Naive thymus-derived CD4-positive, alpha-beta T cell (primary cell): ENCODE measurements at regions of chrX and their contacts with region 1.

Region 1: DNA sequence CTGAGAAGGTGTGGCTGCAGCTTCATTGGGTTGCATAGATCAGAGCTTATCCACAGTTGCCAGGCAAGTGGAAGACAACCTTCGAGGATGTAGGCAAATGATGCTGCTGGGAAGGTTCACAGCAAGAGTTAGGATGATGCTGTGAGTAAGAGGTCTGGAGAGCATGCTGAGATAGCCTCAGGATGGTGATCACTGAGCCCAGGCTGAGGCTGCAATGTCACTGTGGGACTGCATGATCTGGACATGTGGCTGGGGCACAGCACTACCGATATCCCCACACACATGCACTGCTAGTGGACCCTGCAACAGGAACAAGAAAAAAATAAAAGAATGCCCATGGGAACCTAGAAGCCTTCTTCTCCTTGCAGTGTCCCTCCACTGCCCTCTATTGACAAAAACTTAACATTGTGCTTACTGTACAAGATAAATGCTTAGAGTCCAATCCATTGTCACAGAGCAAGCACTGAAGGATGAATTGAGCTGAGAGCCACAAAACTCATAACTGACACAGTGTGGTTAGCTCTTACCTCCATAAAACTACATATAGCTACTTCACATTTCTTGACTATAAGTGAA is 105.6 kb downstream of the CNKSR2 start:
- DNase-seq: peak in 7 of 9 donors; percentile 13 to 59 (median 43)
- ATAC-seq: peak; percentile 67
- H3K4me3 ChIP-seq: no peak overlapping the region
- H3K4me3 Mint-ChIP-seq: no peak overlapping the region
- H3K27ac ChIP-seq: no peak overlapping the region
- H3K27ac Mint-ChIP-seq: no peak overlapping the region
- H3K4me1 ChIP-seq: no peaks in the 10 kb centered on the region
- H3K4me1 Mint-ChIP-seq: peaks cover 0 to 22% (median 14%) of the 10 kb centered on the region in 7 donors
- H3K27me3 ChIP-seq: peaks cover 0 to 3% of the 10 kb centered on the region in 2 donors
- H3K27me3 Mint-ChIP-seq: no peaks in the 10 kb centered on the region

Region 2: GRCh38 chrX:20181598-20182329 is 1298.0 kb before region 1 on chrX:
- CTCF ChIA-PET with region 1: no interaction called
- POLR2A ChIA-PET with region 1: no interaction called
- intact Hi-C with region 1: no loop called
- DNase-seq: peak in 2 of 9 donors; percentile 7 to 11
- ATAC-seq: no peak
- H3K4me3 ChIP-seq: no peak overlapping the region
- H3K4me3 Mint-ChIP-seq: peak overlapping the region in 1 of 10 donors; percentile 21
- H3K27ac ChIP-seq: no peak overlapping the region
- H3K27ac Mint-ChIP-seq: peak overlapping the region; percentile 5 to 83 (median 54)
- H3K4me1 ChIP-seq: peaks cover 0 to 6% of the 10 kb centered on the region in 2 donors
- H3K4me1 Mint-ChIP-seq: peaks cover 6 to 25% (median 22%) of the 10 kb centered on the region in 7 donors
- H3K27me3 ChIP-seq: no peaks in the 10 kb centered on the region
- H3K27me3 Mint-ChIP-seq: no peaks in the 10 kb centered on the region

Region 3: GRCh38 chrX:20802041-20802440 is 677.7 kb before region 1 on chrX:
- CTCF ChIA-PET with region 1: no interaction called
- POLR2A ChIA-PET with region 1: no interaction called
- intact Hi-C with region 1: no loop called
- DNase-seq: no peak
- ATAC-seq: no peak
- H3K4me3 ChIP-seq: no peak overlapping the region
- H3K4me3 Mint-ChIP-seq: no peak overlapping the region
- H3K27ac ChIP-seq: no peak overlapping the region
- H3K27ac Mint-ChIP-seq: no peak overlapping the region
- H3K4me1 ChIP-seq: no peaks in the 10 kb centered on the region
- H3K4me1 Mint-ChIP-seq: no peaks in the 10 kb centered on the region
- H3K27me3 ChIP-seq: no peaks in the 10 kb centered on the region
- H3K27me3 Mint-ChIP-seq: no peaks in the 10 kb centered on the region

Region 4: DNA sequence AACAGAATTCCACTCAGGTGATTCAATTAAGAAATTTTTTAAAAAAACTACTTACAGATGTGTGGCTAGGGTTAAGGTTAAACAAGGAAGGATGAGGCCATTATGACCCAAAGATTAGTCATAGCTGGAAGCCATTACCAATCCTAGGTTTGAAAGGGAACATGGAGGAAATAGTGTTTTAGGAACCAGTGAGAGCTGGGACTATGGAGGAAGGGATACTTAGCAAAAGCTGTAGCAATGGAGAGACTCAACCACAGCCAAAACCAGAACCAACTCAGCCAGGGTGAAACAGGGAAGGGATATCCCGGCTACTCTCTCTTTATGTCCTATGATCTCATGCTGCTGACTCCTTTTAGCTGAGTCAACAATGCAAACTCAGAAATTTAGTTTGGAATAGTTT is 254.1 kb before region 1 on chrX:
- CTCF ChIA-PET with region 1: no interaction called
- POLR2A ChIA-PET with region 1: no interaction called
- intact Hi-C with region 1: loop called in 1 of 2 experiments (anchors 5 kb)
- DNase-seq: no peak
- ATAC-seq: no peak
- H3K4me3 ChIP-seq: no peak overlapping the region
- H3K4me3 Mint-ChIP-seq: no peak overlapping the region
- H3K27ac ChIP-seq: no peak overlapping the region
- H3K27ac Mint-ChIP-seq: no peak overlapping the region
- H3K4me1 ChIP-seq: no peaks in the 10 kb centered on the region
- H3K4me1 Mint-ChIP-seq: peaks cover 0 to 1% (median 0%) of the 10 kb centered on the region in 7 donors
- H3K27me3 ChIP-seq: no peaks in the 10 kb centered on the region
- H3K27me3 Mint-ChIP-seq: no peaks in the 10 kb centered on the region

Region 5: GRCh38 chrX:21438792-21439191 is 41.0 kb before region 1 on chrX:
- CTCF ChIA-PET with region 1: interaction called, 4 read pairs
- POLR2A ChIA-PET with region 1: interaction called, 4 read pairs
- intact Hi-C with region 1: loop called in 1 of 2 experiments (anchors 5 kb)
- DNase-seq: peak in 7 of 9 donors; percentile 7 to 58 (median 47)
- ATAC-seq: peak; percentile 86
- H3K4me3 ChIP-seq: no peak overlapping the region
- H3K4me3 Mint-ChIP-seq: peak overlapping the region; percentile 20 to 89 (median 82)
- H3K27ac ChIP-seq: peak overlapping the region; percentile 50
- H3K27ac Mint-ChIP-seq: peak overlapping the region; percentile 86 to 96 (median 92)
- H3K4me1 ChIP-seq: peaks cover 2 to 14% of the 10 kb centered on the region in 2 donors
- H3K4me1 Mint-ChIP-seq: peaks cover 4 to 61% (median 43%) of the 10 kb centered on the region in 7 donors
- H3K27me3 ChIP-seq: no peaks in the 10 kb centered on the region
- H3K27me3 Mint-ChIP-seq: no peaks in the 10 kb centered on the region

Region 6: GRCh38 chrX:21725496-21725895 is 245.7 kb after region 1 on chrX:
- CTCF ChIA-PET with region 1: interaction called, 4 read pairs
- POLR2A ChIA-PET with region 1: no interaction called
- intact Hi-C with region 1: loop called in 1 of 2 experiments (anchors 5 kb)
- DNase-seq: peak in 6 of 9 donors; percentile 4 to 43 (median 14)
- ATAC-seq: no peak
- H3K4me3 ChIP-seq: no peak overlapping the region
- H3K4me3 Mint-ChIP-seq: no peak overlapping the region
- H3K27ac ChIP-seq: no peak overlapping the region
- H3K27ac Mint-ChIP-seq: no peak overlapping the region
- H3K4me1 ChIP-seq: no peaks in the 10 kb centered on the region
- H3K4me1 Mint-ChIP-seq: no peaks in the 10 kb centered on the region
- H3K27me3 ChIP-seq: no peaks in the 10 kb centered on the region
- H3K27me3 Mint-ChIP-seq: peaks cover 0 to 16% (median 0%) of the 10 kb centered on the region in 5 donors

Region 7: GRCh38 chrX:21800344-21800770 is 320.6 kb after region 1 on chrX:
- CTCF ChIA-PET with region 1: no interaction called
- POLR2A ChIA-PET with region 1: no interaction called
- intact Hi-C with region 1: no loop called
- DNase-seq: no peak
- ATAC-seq: no peak
- H3K4me3 ChIP-seq: no peak overlapping the region
- H3K4me3 Mint-ChIP-seq: no peak overlapping the region
- H3K27ac ChIP-seq: no peak overlapping the region
- H3K27ac Mint-ChIP-seq: no peak overlapping the region
- H3K4me1 ChIP-seq: no peaks in the 10 kb centered on the region
- H3K4me1 Mint-ChIP-seq: no peaks in the 10 kb centered on the region
- H3K27me3 ChIP-seq: no peaks in the 10 kb centered on the region
- H3K27me3 Mint-ChIP-seq: peaks cover 0 to 3% (median 0%) of the 10 kb centered on the region in 5 donors

Region 8: DNA sequence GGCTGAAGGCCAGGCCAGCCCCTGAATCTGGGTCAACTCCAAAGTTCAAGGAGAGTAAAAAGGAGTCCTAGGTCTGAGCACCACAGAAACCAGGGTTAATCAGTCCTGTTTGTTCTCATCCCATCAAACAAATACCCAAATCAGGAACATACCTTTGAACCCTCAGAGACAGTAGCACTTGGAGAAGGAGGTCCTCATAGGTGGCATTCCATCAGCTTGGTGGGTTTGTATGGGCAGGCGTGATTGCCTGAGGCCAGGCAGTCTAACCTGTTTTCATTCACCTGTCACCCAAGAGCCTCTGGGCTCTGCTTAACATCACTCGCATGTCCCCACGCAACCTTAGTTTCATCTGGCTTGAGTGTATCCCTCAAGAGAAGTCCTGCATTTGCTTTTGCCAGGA is 342.1 kb after region 1 on chrX:
- CTCF ChIA-PET with region 1: no interaction called
- POLR2A ChIA-PET with region 1: no interaction called
- intact Hi-C with region 1: no loop called
- DNase-seq: no peak
- ATAC-seq: no peak
- H3K4me3 ChIP-seq: no peak overlapping the region
- H3K4me3 Mint-ChIP-seq: no peak overlapping the region
- H3K27ac ChIP-seq: no peak overlapping the region
- H3K27ac Mint-ChIP-seq: no peak overlapping the region
- H3K4me1 ChIP-seq: no peaks in the 10 kb centered on the region
- H3K4me1 Mint-ChIP-seq: no peaks in the 10 kb centered on the region
- H3K27me3 ChIP-seq: no peaks in the 10 kb centered on the region
- H3K27me3 Mint-ChIP-seq: no peaks in the 10 kb centered on the region